Posterior vena cava (tissue), 2 donors: ENCODE measurements at regions of chr2 and their contacts with region 1.

Region 1: DNA sequence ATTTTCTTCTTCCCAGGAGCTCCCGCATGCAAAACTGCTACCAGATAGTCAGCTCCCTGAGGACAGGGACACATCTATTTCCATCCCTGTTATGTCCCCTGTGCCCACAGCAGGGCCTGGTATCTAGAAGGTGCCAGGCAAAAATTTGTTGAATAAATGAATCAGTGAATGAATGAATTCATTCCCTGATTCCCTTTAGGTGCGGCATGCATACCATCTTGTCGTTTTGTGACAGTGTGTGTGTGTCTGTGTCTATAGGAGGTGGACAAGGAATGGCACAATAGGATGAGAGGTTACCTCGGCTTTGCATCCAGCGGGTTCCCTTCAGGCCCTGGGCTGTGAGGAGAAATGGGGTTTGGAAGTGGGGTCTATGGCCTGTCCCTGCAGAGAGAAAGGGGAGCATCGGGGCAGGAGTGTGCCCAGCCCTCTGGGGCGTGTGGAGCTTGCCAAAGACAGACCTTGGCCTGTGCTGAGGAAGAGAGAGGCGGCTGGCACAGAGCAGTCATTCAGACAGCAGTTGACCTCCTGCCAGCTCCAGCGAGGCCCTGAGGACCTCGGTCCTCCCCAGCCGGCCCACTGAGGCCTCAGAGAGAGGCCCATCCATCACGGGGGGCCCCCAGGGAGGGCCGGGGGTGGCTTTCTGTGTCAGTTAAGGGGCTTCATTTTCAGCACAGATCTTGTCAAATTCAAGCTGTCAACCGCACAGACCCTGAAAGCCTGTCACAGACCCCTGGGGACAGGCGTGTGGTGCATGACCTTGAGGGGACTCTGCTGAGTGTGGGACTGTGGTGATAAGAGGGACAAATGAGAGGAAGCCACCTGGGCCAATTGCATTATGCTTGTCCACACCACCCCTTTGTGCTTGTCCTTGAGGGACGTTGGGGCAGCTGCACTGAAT is 125.9 kb upstream of the CXCR4 start:
- DNase-seq: no peak

Region 2: GRCh38 chr2:136219963-136220362 is 23.9 kb before region 1 on chr2:
- intact Hi-C with region 1: loop called in 1 of 2 experiments (anchors 1 kb)
- DNase-seq: no peak

Region 3: DNA sequence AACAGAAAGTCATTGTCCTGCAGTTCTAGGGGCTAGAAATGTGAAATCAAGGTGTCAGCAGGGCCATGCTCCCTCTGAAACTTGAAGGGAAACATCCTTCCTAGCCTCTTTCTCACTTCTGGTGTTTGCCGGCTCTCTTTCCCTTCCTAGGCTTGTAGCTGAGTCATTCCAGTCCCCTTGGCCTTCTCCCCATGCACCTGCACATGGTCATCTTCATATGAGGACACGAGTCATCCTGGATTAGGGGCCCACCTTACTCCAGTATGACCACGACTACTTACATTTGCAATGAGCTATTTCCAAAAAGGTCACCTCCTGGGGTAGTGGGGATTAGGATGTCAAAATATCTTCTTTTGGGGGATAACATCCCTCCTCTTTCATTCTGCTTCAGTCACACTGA is 42.5 kb after region 1 on chr2:
- intact Hi-C with region 1: no loop called
- DNase-seq: no peak

Region 4: DNA sequence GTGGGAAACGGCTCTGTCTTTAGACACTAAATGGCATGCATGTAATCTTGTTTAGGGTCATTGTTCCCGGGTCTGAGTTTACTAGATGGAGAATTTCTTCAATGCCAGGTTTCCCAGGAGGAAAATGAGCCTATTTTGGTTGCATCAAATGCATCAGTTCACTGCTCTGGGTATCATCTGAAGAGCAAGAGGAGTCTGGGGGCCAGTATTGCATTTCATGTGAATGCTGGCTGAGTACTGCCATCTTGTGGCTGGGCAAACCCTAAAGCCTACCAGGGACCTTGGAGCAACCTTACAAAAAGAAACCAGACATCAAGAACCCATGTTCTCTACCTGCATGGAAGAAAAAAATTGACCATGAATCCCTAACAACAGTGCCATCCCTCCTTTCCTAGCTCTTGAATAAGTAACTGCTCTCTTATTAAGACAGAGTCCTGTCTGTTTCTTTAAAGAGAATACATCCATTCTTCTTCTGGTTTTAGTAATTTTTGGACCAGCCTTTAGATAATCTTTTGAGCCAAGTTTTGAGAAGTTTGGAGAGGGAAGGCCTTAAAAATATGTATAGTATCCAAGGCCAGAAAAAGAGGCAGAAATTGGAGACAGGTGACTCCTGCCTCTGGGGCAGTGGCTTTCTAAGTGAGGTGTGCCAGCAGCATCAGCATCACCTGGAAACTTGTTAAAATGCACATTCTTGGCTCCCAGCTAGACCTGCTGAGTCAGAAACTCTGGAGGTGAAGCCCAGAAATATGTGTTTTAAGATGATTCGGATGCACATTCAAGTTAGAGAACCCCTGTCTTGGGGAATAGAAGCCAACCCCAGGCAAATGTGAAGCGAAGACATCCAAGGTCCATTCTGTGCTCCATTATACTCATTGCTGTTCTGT is 135.1 kb after region 1 on chr2:
- intact Hi-C with region 1: no loop called
- DNase-seq: no peak